ENCODE measurements at regions of chr7 and their contacts with region 1.

Region 1: GRCh38 chr7:96303686-96304443 is 18.0 kb downstream of the SLC25A13 start:
- DNase-seq: no peak
- ATAC-seq: peak; percentile 91
- H3K4me3 Mint-ChIP-seq: no peak overlapping the region
- H3K27ac Mint-ChIP-seq: peak overlapping the region; percentile 80
- H3K4me1 Mint-ChIP-seq: peaks cover 58% of the 10 kb centered on the region
- H3K27me3 Mint-ChIP-seq: no peaks in the 10 kb centered on the region

Region 2: GRCh38 chr7:96061844-96062243 is 242.0 kb before region 1 on chr7:
- CTCF ChIA-PET with region 1: no interaction called
- POLR2A ChIA-PET with region 1: no interaction called
- intact Hi-C with region 1: no loop called
- DNase-seq: no peak
- ATAC-seq: no peak
- H3K4me3 Mint-ChIP-seq: no peak overlapping the region
- H3K27ac Mint-ChIP-seq: no peak overlapping the region
- H3K4me1 Mint-ChIP-seq: no peaks in the 10 kb centered on the region
- H3K27me3 Mint-ChIP-seq: peaks cover 31% of the 10 kb centered on the region

Region 3: GRCh38 chr7:96285579-96285978 is 18.3 kb before region 1 on chr7:
- CTCF ChIA-PET with region 1: no interaction called
- POLR2A ChIA-PET with region 1: interaction called, 9 read pairs
- intact Hi-C with region 1: loop called (anchors 1 kb)
- DNase-seq: peak; percentile 37
- ATAC-seq: peak; percentile 60
- H3K4me3 Mint-ChIP-seq: peak overlapping the region; percentile 28
- H3K27ac Mint-ChIP-seq: peak overlapping the region; percentile 94
- H3K4me1 Mint-ChIP-seq: peaks cover 43% of the 10 kb centered on the region
- H3K27me3 Mint-ChIP-seq: no peaks in the 10 kb centered on the region

Region 4: DNA sequence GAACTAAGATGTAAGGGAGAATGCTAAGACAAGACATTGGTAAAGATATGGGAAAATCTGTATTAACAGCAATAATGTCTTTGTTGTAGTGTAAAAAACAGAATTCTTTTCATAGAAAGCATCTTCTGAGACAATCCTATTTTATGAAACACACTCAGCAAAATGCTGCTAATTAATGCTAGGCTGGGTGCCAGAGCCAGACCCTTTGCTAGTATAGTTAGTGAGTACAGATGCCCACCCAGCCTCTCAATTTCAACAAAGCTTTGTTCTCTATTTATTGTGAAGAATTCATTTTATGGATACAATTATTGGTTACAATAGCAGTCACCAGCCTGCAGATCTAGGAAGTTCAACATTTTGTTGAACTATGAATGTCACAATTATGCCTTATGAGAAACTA is 274.7 kb after region 1 on chr7:
- CTCF ChIA-PET with region 1: no interaction called
- POLR2A ChIA-PET with region 1: no interaction called
- intact Hi-C with region 1: no loop called
- DNase-seq: no peak
- ATAC-seq: no peak
- H3K4me3 Mint-ChIP-seq: no peak overlapping the region
- H3K27ac Mint-ChIP-seq: no peak overlapping the region
- H3K4me1 Mint-ChIP-seq: no peaks in the 10 kb centered on the region
- H3K27me3 Mint-ChIP-seq: peaks cover 11% of the 10 kb centered on the region

Measured in activated CD4-positive, alpha-beta T cell treated with anti-CD3 and anti-CD28 coated beads for 36 hours (primary cell).